ENCODE measurements at regions of chr17 and their contacts with region 1.

Region 1: DNA sequence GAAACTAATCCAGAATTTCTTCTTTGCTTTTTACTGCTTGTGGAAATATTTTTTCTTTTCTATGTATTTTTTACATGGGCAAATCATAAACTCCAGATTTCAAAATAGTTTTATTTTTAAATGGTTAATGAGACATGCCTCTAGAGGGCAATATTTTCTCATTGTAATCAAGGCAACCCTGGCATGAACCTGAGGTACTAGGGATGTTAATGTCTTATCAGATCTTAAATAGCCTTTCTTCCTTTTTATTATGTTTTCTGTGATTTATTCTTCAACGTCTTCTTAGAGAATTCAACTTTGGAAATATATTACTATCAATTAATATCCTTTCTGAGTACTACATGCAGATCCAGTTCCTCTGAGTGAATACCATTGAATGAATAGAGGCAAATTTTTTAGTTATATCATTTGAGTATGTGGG is 324.7 kb downstream of the BCAS3 start:
- DNase-seq: peak; percentile 41
- ATAC-seq: no peak
- H3K4me3 ChIP-seq: no peak overlapping the region
- H3K27ac ChIP-seq: no peak overlapping the region
- H3K4me1 ChIP-seq: no peaks in the 10 kb centered on the region
- H3K27me3 ChIP-seq: no peaks in the 10 kb centered on the region
- CTCF ChIP-seq: peak; percentile 69
- EP300 ChIP-seq: no peak
- POLR2A ChIP-seq: no peak
- RAD21 ChIP-seq: peak; percentile 48; the same call in 1 of the 2 replicates

Region 2: GRCh38 chr17:61349350-61349749 is 347.0 kb after region 1 on chr17:
- CTCF ChIA-PET with region 1: interaction called, 4 read pairs
- POLR2A ChIA-PET with region 1: no interaction called
- in situ Hi-C with region 1: no loop called
- intact Hi-C with region 1: loop called (anchors 1 kb)
- DNase-seq: peak; percentile 34
- ATAC-seq: no peak
- H3K4me3 ChIP-seq: no peak overlapping the region
- H3K27ac ChIP-seq: no peak overlapping the region
- H3K4me1 ChIP-seq: peaks cover 47% of the 10 kb centered on the region
- H3K27me3 ChIP-seq: no peaks in the 10 kb centered on the region
- CTCF ChIP-seq: peak; percentile 51
- EP300 ChIP-seq: no peak
- POLR2A ChIP-seq: no peak
- RAD21 ChIP-seq: peak; percentile 66; the same call in 1 of the 2 replicates

Measured in HepG2 (cell line).